ENCODE measurements at regions of chr7 and their contacts with region 1.

Region 1: GRCh38 chr7:20172736-20173334 is 44.3 kb downstream of the MACC1 start:
- DNase-seq: peak; percentile 60 to 84
- H3K4me3 ChIP-seq: no peak overlapping the region
- H3K27ac ChIP-seq: no peak overlapping the region
- H3K4me1 ChIP-seq: no peaks in the 10 kb centered on the region
- H3K27me3 ChIP-seq: no peaks in the 10 kb centered on the region
- CTCF ChIP-seq: peak; percentile 80 to 87 (median 83)
- EP300 ChIP-seq: no peak
- POLR2A ChIP-seq: no peak
- RAD21 ChIP-seq: peak; percentile 94

Region 2: GRCh38 chr7:19713676-19714075 is 459.2 kb before region 1 on chr7:
- CTCF ChIA-PET with region 1: interaction called, 12 read pairs
- POLR2A ChIA-PET with region 1: no interaction called
- DNase-seq: no peak
- H3K4me3 ChIP-seq: no peak overlapping the region
- H3K27ac ChIP-seq: no peak overlapping the region
- H3K4me1 ChIP-seq: no peaks in the 10 kb centered on the region
- H3K27me3 ChIP-seq: no peaks in the 10 kb centered on the region
- CTCF ChIP-seq: peak in 2 of 3 experiments; percentile 24 to 48; a peak in 2 of 4 replicates
- EP300 ChIP-seq: no peak
- POLR2A ChIP-seq: no peak
- RAD21 ChIP-seq: peak; percentile 61 to 62

Region 3: DNA sequence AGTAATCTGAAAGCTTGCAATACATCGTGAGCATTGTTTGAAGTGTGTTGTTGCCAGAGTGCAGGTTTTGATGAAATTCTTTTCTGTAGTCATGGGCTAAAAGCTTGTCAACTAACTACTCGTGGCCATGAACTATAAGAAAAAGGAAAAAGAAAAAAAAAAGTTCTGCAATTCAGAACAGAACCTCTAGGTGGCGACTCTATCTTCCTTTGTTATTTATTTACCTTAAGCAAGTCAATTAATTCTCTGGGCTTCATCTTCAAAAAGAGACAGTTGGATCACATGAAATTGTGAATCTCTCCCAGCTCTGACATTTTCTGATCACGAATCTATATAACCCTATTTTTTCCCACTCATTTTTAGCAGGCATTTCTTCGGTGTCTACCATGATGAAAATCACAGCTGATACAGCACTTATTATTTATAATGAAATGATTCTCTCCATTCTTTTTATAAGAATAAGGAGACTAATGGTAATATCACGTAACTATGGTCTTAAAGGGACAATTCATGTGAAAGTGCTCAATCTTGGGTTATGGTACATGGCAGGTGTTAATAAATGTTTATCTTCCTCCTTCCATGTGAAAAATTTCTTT is 418.2 kb before region 1 on chr7:
- CTCF ChIA-PET with region 1: interaction called, 29 read pairs
- POLR2A ChIA-PET with region 1: interaction called, 3 read pairs
- DNase-seq: no peak
- H3K4me3 ChIP-seq: no peak overlapping the region
- H3K27ac ChIP-seq: no peak overlapping the region
- H3K4me1 ChIP-seq: no peaks in the 10 kb centered on the region
- H3K27me3 ChIP-seq: no peaks in the 10 kb centered on the region
- CTCF ChIP-seq: peak in 2 of 3 experiments; percentile 25 to 51; a peak in 2 of 4 replicates
- EP300 ChIP-seq: no peak
- POLR2A ChIP-seq: no peak
- RAD21 ChIP-seq: peak; percentile 60 to 61

Region 4: GRCh38 chr7:20114468-20114867 is 58.4 kb before region 1 on chr7:
- CTCF ChIA-PET with region 1: interaction called, 10 read pairs
- POLR2A ChIA-PET with region 1: interaction called, 4 read pairs
- DNase-seq: no peak
- H3K4me3 ChIP-seq: no peak overlapping the region
- H3K27ac ChIP-seq: no peak overlapping the region
- H3K4me1 ChIP-seq: peaks cover 2 to 43% (median 13%) of the 10 kb centered on the region in 4 experiments; a peak in 6 of 7 replicates
- H3K27me3 ChIP-seq: no peaks in the 10 kb centered on the region
- CTCF ChIP-seq: no peak
- EP300 ChIP-seq: no peak
- POLR2A ChIP-seq: peak in 1 of 2 experiments; percentile 30; a peak in 1 of 3 replicates
- RAD21 ChIP-seq: no peak

Region 5: GRCh38 chr7:20153999-20154398 is 18.8 kb before region 1 on chr7:
- CTCF ChIA-PET with region 1: interaction called, 13 read pairs
- POLR2A ChIA-PET with region 1: interaction called, 3 read pairs
- DNase-seq: no peak
- H3K4me3 ChIP-seq: no peak overlapping the region
- H3K27ac ChIP-seq: no peak overlapping the region
- H3K4me1 ChIP-seq: no peaks in the 10 kb centered on the region
- H3K27me3 ChIP-seq: no peaks in the 10 kb centered on the region
- CTCF ChIP-seq: no peak
- EP300 ChIP-seq: no peak
- POLR2A ChIP-seq: no peak
- RAD21 ChIP-seq: no peak

Region 6: DNA sequence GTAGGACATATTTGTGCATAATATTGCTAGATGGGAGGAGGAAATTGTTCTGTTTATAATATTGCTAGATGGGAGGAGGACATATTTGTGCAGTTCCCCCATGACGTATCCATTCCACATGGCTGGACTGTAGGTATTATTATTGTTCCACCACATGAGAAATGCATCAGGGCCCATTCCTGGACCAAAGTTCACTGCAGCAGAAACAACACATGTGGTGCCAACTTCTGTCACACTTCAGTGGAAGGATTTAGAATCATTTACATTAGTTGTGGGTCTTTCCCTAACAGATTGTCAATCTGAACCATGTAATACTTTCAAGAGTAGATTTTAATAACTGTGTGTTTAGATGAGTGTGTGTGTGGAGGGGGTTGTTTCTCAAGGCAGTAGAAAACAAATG is 77.1 kb after region 1 on chr7:
- CTCF ChIA-PET with region 1: no interaction called
- POLR2A ChIA-PET with region 1: no interaction called
- DNase-seq: no peak
- H3K4me3 ChIP-seq: no peak overlapping the region
- H3K27ac ChIP-seq: no peak overlapping the region
- H3K4me1 ChIP-seq: no peaks in the 10 kb centered on the region
- H3K27me3 ChIP-seq: no peaks in the 10 kb centered on the region
- CTCF ChIP-seq: no peak
- EP300 ChIP-seq: no peak
- POLR2A ChIP-seq: no peak
- RAD21 ChIP-seq: no peak

Region 7: DNA sequence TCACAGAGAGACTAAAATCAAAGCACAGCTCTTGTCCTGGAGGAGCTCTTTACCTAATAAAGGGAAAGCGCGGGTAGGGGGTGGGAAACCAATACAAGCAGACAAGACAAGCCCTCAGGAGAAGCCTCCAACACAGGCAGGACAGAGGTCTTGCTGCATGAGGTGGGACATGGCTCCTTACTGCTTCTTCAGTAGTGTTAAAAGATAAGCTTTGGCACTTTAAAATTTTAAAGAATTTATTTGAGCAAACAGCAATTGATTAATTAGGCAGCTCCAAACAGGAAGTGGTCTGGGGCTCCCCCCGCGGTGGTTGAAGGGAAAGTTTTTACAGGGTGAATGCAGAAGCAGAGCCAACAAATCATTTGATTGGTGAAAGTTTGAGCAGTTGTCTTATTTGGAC is 94.6 kb after region 1 on chr7:
- CTCF ChIA-PET with region 1: no interaction called
- POLR2A ChIA-PET with region 1: no interaction called
- DNase-seq: peak in 1 of 2 experiments; percentile 57
- H3K4me3 ChIP-seq: no peak overlapping the region
- H3K27ac ChIP-seq: no peak overlapping the region
- H3K4me1 ChIP-seq: peaks cover 0 to 7% (median 3%) of the 10 kb centered on the region in 4 experiments; a peak in 3 of 7 replicates
- H3K27me3 ChIP-seq: no peaks in the 10 kb centered on the region
- CTCF ChIP-seq: peak in 1 of 3 experiments; percentile 14; a peak in 1 of 4 replicates
- EP300 ChIP-seq: no peak
- POLR2A ChIP-seq: no peak
- RAD21 ChIP-seq: peak in 1 of 2 experiments; percentile 8; a peak in 1 of 4 replicates